CD4-positive, alpha-beta memory T cell (primary cell): ENCODE measurements at regions of chr20 and their contacts with region 1.

Region 1: GRCh38 chr20:56400090-56400542 is 7.7 kb downstream of the CSTF1 start:
- DNase-seq: peak; percentile 65 to 70 (median 70)
- H3K4me3 ChIP-seq: no peak overlapping the region
- H3K4me3 Mint-ChIP-seq: no peak overlapping the region
- H3K27ac ChIP-seq: no peak overlapping the region
- H3K27ac Mint-ChIP-seq: peak overlapping the region in 6 of 7 donors; percentile 43 to 84 (median 68)
- H3K4me1 ChIP-seq: peaks cover 15% of the 10 kb centered on the region
- H3K4me1 Mint-ChIP-seq: peaks cover 11 to 30% (median 18%) of the 10 kb centered on the region in 4 donors
- H3K27me3 ChIP-seq: no peaks in the 10 kb centered on the region
- H3K27me3 Mint-ChIP-seq: no peaks in the 10 kb centered on the region

Region 2: GRCh38 chr20:56439771-56440291 is 39.7 kb after region 1 on chr20:
- CTCF ChIA-PET with region 1: interaction called, 4 read pairs
- POLR2A ChIA-PET with region 1: interaction called, 3 read pairs
- intact Hi-C with region 1: loop called (anchors 2 kb)
- DNase-seq: no peak
- H3K4me3 ChIP-seq: no peak overlapping the region
- H3K4me3 Mint-ChIP-seq: peak overlapping the region; percentile 31 to 89 (median 73)
- H3K27ac ChIP-seq: peak overlapping the region; percentile 5
- H3K27ac Mint-ChIP-seq: peak overlapping the region; percentile 86 to 94 (median 89)
- H3K4me1 ChIP-seq: peaks cover 53% of the 10 kb centered on the region
- H3K4me1 Mint-ChIP-seq: peaks cover 31 to 71% (median 50%) of the 10 kb centered on the region in 4 donors
- H3K27me3 ChIP-seq: no peaks in the 10 kb centered on the region
- H3K27me3 Mint-ChIP-seq: no peaks in the 10 kb centered on the region

Region 3: DNA sequence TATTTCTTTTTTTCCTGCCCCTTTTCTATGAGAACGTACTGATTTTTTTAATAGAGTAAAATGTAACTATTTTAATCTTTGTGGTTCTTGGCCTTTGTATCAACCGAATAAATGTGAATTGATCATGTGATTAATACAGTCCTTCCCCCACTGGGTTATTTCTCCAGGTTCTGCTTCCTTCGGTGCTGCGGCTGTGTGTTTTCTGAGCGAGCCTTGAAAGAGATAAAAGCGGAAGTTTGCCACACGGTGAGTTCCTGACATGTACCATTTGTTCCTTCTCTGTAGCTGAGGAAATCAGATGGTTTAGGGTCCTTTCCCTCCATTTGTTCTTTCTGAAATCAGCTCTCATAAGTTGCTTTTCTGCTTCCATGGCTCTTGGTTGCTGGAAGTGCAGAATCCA is 83.8 kb after region 1 on chr20:
- CTCF ChIA-PET with region 1: no interaction called
- POLR2A ChIA-PET with region 1: no interaction called
- intact Hi-C with region 1: no loop called
- DNase-seq: peak in 2 of 5 donors; percentile 9 to 10
- H3K4me3 ChIP-seq: peak overlapping the region in 1 of 2 donors; percentile 6
- H3K4me3 Mint-ChIP-seq: peak overlapping the region; percentile 32 to 78 (median 69)
- H3K27ac ChIP-seq: peak overlapping the region; percentile 10
- H3K27ac Mint-ChIP-seq: peak overlapping the region; percentile 77 to 87 (median 85)
- H3K4me1 ChIP-seq: peaks cover 17% of the 10 kb centered on the region
- H3K4me1 Mint-ChIP-seq: peaks cover 22 to 46% (median 33%) of the 10 kb centered on the region in 4 donors
- H3K27me3 ChIP-seq: no peaks in the 10 kb centered on the region
- H3K27me3 Mint-ChIP-seq: no peaks in the 10 kb centered on the region

Region 4: GRCh38 chr20:56516631-56517030 is 116.5 kb after region 1 on chr20:
- CTCF ChIA-PET with region 1: interaction called, 4 read pairs
- POLR2A ChIA-PET with region 1: no interaction called
- intact Hi-C with region 1: loop called (anchors 1 kb)
- DNase-seq: no peak
- H3K4me3 ChIP-seq: no peak overlapping the region
- H3K4me3 Mint-ChIP-seq: no peak overlapping the region
- H3K27ac ChIP-seq: no peak overlapping the region
- H3K27ac Mint-ChIP-seq: no peak overlapping the region
- H3K4me1 ChIP-seq: no peaks in the 10 kb centered on the region
- H3K4me1 Mint-ChIP-seq: peaks cover 0 to 9% (median 1%) of the 10 kb centered on the region in 4 donors
- H3K27me3 ChIP-seq: no peaks in the 10 kb centered on the region
- H3K27me3 Mint-ChIP-seq: no peaks in the 10 kb centered on the region

Region 5: GRCh38 chr20:56735191-56735711 is 335.1 kb after region 1 on chr20:
- CTCF ChIA-PET with region 1: no interaction called
- POLR2A ChIA-PET with region 1: no interaction called
- intact Hi-C with region 1: no loop called
- DNase-seq: no peak
- H3K4me3 ChIP-seq: no peak overlapping the region
- H3K4me3 Mint-ChIP-seq: no peak overlapping the region
- H3K27ac ChIP-seq: no peak overlapping the region
- H3K27ac Mint-ChIP-seq: no peak overlapping the region
- H3K4me1 ChIP-seq: no peaks in the 10 kb centered on the region
- H3K4me1 Mint-ChIP-seq: no peaks in the 10 kb centered on the region
- H3K27me3 ChIP-seq: no peaks in the 10 kb centered on the region
- H3K27me3 Mint-ChIP-seq: peaks cover 12 to 19% of the 10 kb centered on the region in 2 donors